Heart left ventricle (tissue), 16 donors: ENCODE measurements at regions of chr2 and their contacts with region 1.

Region 1: DNA sequence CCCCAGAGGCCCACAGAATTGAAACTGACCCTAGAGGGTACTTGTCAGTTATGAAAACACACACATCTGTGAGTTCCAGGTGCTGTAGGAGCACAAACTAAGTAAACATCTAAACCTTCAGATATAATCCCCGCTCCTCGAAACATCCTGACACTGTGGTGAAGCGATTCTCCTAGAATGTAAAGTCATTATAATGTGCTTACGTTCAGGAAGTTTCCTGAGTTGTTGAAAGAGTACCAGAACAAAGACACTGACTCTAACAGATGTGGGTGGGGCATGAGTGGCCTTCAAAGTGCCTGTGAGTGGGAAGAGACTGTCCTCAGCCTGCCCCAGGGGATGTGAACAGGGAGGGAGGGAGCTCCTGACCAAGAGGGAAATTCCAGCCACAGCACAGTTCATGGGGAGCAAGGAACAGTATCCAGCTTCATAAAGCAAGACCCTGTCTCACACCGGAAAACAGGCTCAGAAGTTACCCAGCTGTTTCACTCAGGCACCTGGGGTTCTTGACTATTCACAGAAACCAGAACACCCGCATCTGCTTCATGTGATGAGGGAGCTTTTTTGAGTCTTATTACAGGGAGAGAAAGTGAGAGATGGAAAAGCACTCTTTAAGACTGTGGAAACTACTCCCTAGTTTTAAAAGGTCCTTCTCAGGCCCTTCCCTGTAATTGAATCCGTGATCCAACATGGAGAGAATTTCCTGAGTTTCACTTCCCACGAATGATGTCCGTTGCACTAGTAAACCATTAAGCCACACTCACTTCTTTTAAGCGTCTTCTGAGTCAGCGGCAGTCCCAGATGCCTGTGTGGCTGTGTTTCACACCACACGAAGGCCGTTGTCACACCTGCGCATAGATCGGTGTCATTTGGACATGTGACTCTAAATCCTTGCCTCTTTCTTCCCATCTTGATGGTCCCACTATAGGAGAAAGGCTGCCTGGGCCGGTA is 88.6 kb upstream of the EML6 start:
- DNase-seq: peak in 4 of 5 donors; percentile 79 to 87 (median 84)
- ATAC-seq: peak; percentile 66 to 86 (median 76)
- H3K4me3 ChIP-seq: peak overlapping the region in 5 of 12 donors; percentile 12 to 37 (median 20)
- H3K27ac ChIP-seq: peak overlapping the region; percentile 54 to 94 (median 86)
- H3K4me1 ChIP-seq: peaks cover 31 to 100% (median 97%) of the 10 kb centered on the region in 12 donors
- H3K27me3 ChIP-seq: no peaks in the 10 kb centered on the region
- CTCF ChIP-seq: no peak
- POLR2A ChIP-seq: no peak

Region 2: GRCh38 chr2:54341656-54342055 is 293.2 kb before region 1 on chr2:
- intact Hi-C with region 1: loop called in 1 of 10 experiments (anchors 10 kb)
- DNase-seq: no peak
- ATAC-seq: peak; percentile 47 to 75 (median 68)
- H3K4me3 ChIP-seq: no peak overlapping the region
- H3K27ac ChIP-seq: peak overlapping the region in 2 of 12 donors; percentile 20 to 26
- H3K4me1 ChIP-seq: peaks cover 0 to 34% (median 10%) of the 10 kb centered on the region in 12 donors
- H3K27me3 ChIP-seq: no peaks in the 10 kb centered on the region
- CTCF ChIP-seq: peak in 8 of 12 donors; percentile 21 to 63 (median 42)
- POLR2A ChIP-seq: no peak

Region 3: DNA sequence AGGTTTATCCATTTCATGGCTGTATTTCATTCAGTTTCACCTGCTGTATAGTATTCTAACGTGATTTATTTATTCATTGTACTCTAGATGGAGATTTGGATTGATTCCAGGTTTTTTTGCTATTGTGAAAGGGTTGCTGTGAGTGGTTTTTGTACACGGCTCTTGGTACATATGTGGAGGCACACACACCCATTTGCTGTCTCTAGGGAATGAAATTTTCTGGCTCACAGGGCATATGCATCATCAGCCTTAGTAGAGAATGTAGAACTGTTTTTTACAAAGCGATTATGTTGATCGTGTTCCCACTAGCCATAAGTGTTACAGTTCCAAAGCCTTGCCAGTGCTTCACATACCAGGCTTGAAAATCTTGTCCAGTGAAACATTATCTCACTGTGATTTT is 173.6 kb before region 1 on chr2:
- intact Hi-C with region 1: loop called in 2 of 10 experiments (anchors 5 to 10 kb)
- DNase-seq: no peak
- ATAC-seq: peak; percentile 21 to 50 (median 34)
- H3K4me3 ChIP-seq: peak overlapping the region in 3 of 12 donors; percentile 2 to 86 (median 17)
- H3K27ac ChIP-seq: peak overlapping the region in 11 of 12 donors; percentile 55 to 99 (median 96)
- H3K4me1 ChIP-seq: peaks cover 21 to 83% (median 65%) of the 10 kb centered on the region in 12 donors
- H3K27me3 ChIP-seq: peaks cover 0 to 22% (median 0%) of the 10 kb centered on the region in 9 donors
- CTCF ChIP-seq: no peak
- POLR2A ChIP-seq: no peak

Region 4: GRCh38 chr2:54522624-54523281 is 112.1 kb before region 1 on chr2:
- intact Hi-C with region 1: loop called in 5 of 10 experiments (anchors 5 to 10 kb)
- DNase-seq: peak in 2 of 5 donors; percentile 45
- ATAC-seq: peak in 2 of 4 donors; percentile 37 to 47
- H3K4me3 ChIP-seq: no peak overlapping the region
- H3K27ac ChIP-seq: peak overlapping the region in 5 of 12 donors; percentile 6 to 82 (median 59)
- H3K4me1 ChIP-seq: peaks cover 8 to 94% (median 87%) of the 10 kb centered on the region in 12 donors
- H3K27me3 ChIP-seq: no peaks in the 10 kb centered on the region
- CTCF ChIP-seq: peak; percentile 42 to 68 (median 59)
- POLR2A ChIP-seq: no peak

Region 5: GRCh38 chr2:54579684-54580620 is 54.9 kb before region 1 on chr2:
- intact Hi-C with region 1: loop called in 2 of 10 experiments (anchors 10 kb)
- DNase-seq: no peak
- ATAC-seq: peak in 1 of 4 donors; percentile 5
- H3K4me3 ChIP-seq: no peak overlapping the region
- H3K27ac ChIP-seq: peak overlapping the region in 10 of 12 donors; percentile 7 to 86 (median 37)
- H3K4me1 ChIP-seq: peaks cover 22 to 100% (median 96%) of the 10 kb centered on the region in 12 donors
- H3K27me3 ChIP-seq: no peaks in the 10 kb centered on the region
- CTCF ChIP-seq: no peak
- POLR2A ChIP-seq: no peak

Region 6: GRCh38 chr2:54597153-54597848 is 37.5 kb before region 1 on chr2:
- intact Hi-C with region 1: loop called in 1 of 10 experiments (anchors 5 kb)
- DNase-seq: peak; percentile 72 to 77 (median 74)
- ATAC-seq: peak; percentile 30 to 58 (median 52)
- H3K4me3 ChIP-seq: peak overlapping the region in 1 of 12 donors; percentile 17
- H3K27ac ChIP-seq: peak overlapping the region in 11 of 12 donors; percentile 44 to 82 (median 73)
- H3K4me1 ChIP-seq: peaks cover 43 to 96% (median 84%) of the 10 kb centered on the region in 12 donors
- H3K27me3 ChIP-seq: no peaks in the 10 kb centered on the region
- CTCF ChIP-seq: no peak
- POLR2A ChIP-seq: no peak

Region 7: GRCh38 chr2:54665436-54665856 is 30.6 kb after region 1 on chr2:
- intact Hi-C with region 1: loop called in 1 of 10 experiments (anchors 2 kb)
- DNase-seq: no peak
- ATAC-seq: peak in 3 of 4 donors; percentile 23 to 34 (median 31)
- H3K4me3 ChIP-seq: no peak overlapping the region
- H3K27ac ChIP-seq: peak overlapping the region; percentile 77 to 96 (median 84)
- H3K4me1 ChIP-seq: peaks cover 20 to 63% (median 48%) of the 10 kb centered on the region in 12 donors
- H3K27me3 ChIP-seq: no peaks in the 10 kb centered on the region
- CTCF ChIP-seq: peak; percentile 35 to 70 (median 60)
- POLR2A ChIP-seq: no peak

Region 8: DNA sequence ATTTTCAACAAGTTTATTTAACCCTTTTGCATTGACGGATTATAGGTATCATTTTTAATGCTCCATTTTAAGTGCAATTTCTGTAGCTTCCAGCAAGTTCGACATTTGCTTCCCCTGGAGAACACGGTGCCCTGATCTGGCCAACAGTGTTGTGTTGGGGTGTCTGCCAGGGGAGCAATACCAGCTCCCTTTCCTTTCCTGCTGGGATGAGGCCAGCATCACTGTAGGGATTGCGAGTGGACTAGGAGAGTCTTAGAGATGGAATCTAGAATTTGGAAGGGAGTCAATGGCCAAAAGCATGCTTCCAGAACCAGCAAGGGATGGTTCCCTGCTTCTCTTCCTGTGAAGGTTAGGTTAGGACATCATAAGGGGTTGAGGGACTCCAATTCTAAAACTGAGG is 280.3 kb after region 1 on chr2:
- intact Hi-C with region 1: no loop called
- DNase-seq: no peak
- ATAC-seq: no peak
- H3K4me3 ChIP-seq: no peak overlapping the region
- H3K27ac ChIP-seq: no peak overlapping the region
- H3K4me1 ChIP-seq: no peaks in the 10 kb centered on the region
- H3K27me3 ChIP-seq: peaks cover 0 to 2% (median 0%) of the 10 kb centered on the region in 9 donors
- CTCF ChIP-seq: no peak
- POLR2A ChIP-seq: no peak